Ascending aorta (tissue), 2 donors: ENCODE measurements at regions of chr18 and their contacts with region 1.

Region 1: DNA sequence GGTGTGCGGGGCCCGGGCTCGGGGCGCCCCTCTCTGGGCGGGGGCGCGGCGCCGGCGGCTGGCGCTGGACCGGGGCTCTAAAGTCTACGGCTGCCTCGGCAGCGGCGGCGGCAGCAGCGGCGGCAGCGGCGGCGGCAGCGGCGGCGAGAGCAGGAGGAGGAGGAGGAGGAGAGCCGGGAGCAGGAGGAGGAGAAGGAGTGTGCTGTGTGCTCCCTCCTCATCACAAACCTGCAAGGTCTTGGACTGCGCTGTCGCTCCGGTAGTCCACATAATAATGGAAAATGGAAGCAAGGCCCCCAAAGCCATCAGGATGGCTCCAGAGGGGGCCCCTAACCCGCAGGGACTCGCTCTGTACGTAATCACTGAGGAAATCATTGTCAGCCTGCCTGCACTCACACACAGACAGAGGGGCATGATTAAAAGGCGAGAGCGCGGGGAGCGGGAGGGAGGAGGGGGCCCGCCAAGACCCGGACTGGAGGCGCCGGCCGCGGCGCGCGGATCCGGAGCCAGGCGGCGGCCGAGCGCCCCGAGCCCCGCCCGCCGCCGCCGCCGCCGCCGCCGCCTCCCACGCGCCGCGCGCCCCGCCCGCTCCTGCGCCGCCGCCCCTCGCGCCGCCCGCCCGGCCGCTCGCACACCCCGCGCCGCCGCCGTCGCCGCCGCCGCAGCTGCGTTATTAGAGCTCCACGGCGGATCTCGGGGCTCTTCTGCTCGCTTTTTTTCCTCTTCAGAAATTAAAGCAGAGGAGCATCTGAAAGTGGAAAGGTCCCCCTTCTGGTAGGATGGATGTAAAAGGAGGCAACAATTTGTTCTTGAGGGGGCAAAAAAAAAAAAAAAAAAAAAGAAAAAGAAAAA is at the start of gene ZNF521:
- DNase-seq: peak; percentile 36 to 91
- H3K4me3 ChIP-seq: peak within 1 kb of the TSS; percentile 70 to 72
- H3K27ac ChIP-seq: peak within 1 kb of the TSS; percentile 71 to 83
- H3K4me1 ChIP-seq: peaks cover 2 to 10% of the 10 kb centered on the region in 2 donors
- H3K27me3 ChIP-seq: peaks cover 4% of the 10 kb centered on the region
- CTCF ChIP-seq: peak in 1 of 3 experiments; percentile 5
- total RNA-seq, gene ZNF521: 41.6 TPM

Region 2: GRCh38 chr18:23586249-23587196 is 1765.5 kb before region 1 on chr18 and contains the start of gene NPC1:
- intact Hi-C with region 1: loop called (anchors 10 kb)
- DNase-seq: peak; percentile 81 to 97
- H3K4me3 ChIP-seq: peak within 1 kb of the TSS; percentile 84 to 87
- H3K27ac ChIP-seq: peak within 1 kb of the TSS; percentile 98 to 100
- H3K4me1 ChIP-seq: peaks cover 10 to 29% of the 10 kb centered on the region in 2 donors
- H3K27me3 ChIP-seq: no peaks in the 10 kb centered on the region
- CTCF ChIP-seq: peak; percentile 90 to 96 (median 92)
- total RNA-seq, gene NPC1: 21.6 TPM

Region 3: GRCh38 chr18:24397694-24398365 is 954.2 kb before region 1 on chr18 and contains the start of gene OSBPL1A:
- intact Hi-C with region 1: loop called (anchors 10 kb)
- DNase-seq: peak; percentile 85 to 97
- H3K4me3 ChIP-seq: peak within 1 kb of the TSS; percentile 78 to 84
- H3K27ac ChIP-seq: peak within 1 kb of the TSS; percentile 84 to 90
- H3K4me1 ChIP-seq: no peaks in the 10 kb centered on the region
- H3K27me3 ChIP-seq: no peaks in the 10 kb centered on the region
- CTCF ChIP-seq: no peak
- total RNA-seq, gene OSBPL1A: 42.9 TPM

Region 4: GRCh38 chr18:25230658-25231326 is 121.2 kb before region 1 on chr18:
- intact Hi-C with region 1: loop called (anchors 2 kb)
- DNase-seq: peak; percentile 17 to 91
- H3K4me3 ChIP-seq: peak overlapping the region in 1 of 2 donors; percentile 43
- H3K27ac ChIP-seq: peak overlapping the region; percentile 68 to 80
- H3K4me1 ChIP-seq: peaks cover 0 to 21% of the 10 kb centered on the region in 2 donors
- H3K27me3 ChIP-seq: no peaks in the 10 kb centered on the region
- CTCF ChIP-seq: no peak

Region 5: GRCh38 chr18:25298853-25299274 is 53.1 kb before region 1 on chr18:
- intact Hi-C with region 1: no loop called
- DNase-seq: no peak
- H3K4me3 ChIP-seq: no peak overlapping the region
- H3K27ac ChIP-seq: no peak overlapping the region
- H3K4me1 ChIP-seq: no peaks in the 10 kb centered on the region
- H3K27me3 ChIP-seq: no peaks in the 10 kb centered on the region
- CTCF ChIP-seq: no peak

Region 6: GRCh38 chr18:25453556-25454269 is 101.7 kb after region 1 on chr18:
- intact Hi-C with region 1: no loop called
- DNase-seq: peak in 1 of 2 donors; percentile 64
- H3K4me3 ChIP-seq: no peak overlapping the region
- H3K27ac ChIP-seq: peak overlapping the region in 1 of 2 donors; percentile 24
- H3K4me1 ChIP-seq: no peaks in the 10 kb centered on the region
- H3K27me3 ChIP-seq: no peaks in the 10 kb centered on the region
- CTCF ChIP-seq: no peak

Region 7: GRCh38 chr18:25503567-25504081 is 151.6 kb after region 1 on chr18:
- intact Hi-C with region 1: loop called (anchors 1 kb)
- DNase-seq: peak in 1 of 2 donors; percentile 84
- H3K4me3 ChIP-seq: peak overlapping the region; percentile 46
- H3K27ac ChIP-seq: no peak overlapping the region
- H3K4me1 ChIP-seq: peaks cover 0 to 2% of the 10 kb centered on the region in 2 donors
- H3K27me3 ChIP-seq: no peaks in the 10 kb centered on the region
- CTCF ChIP-seq: no peak

Region 8: GRCh38 chr18:26226229-26227005 is 874.4 kb after region 1 on chr18 and contains the start of gene TAF4B:
- intact Hi-C with region 1: loop called (anchors 10 kb)
- DNase-seq: peak; percentile 71 to 95
- H3K4me3 ChIP-seq: peak within 1 kb of the TSS; percentile 80 to 96
- H3K27ac ChIP-seq: peak within 1 kb of the TSS; percentile 66 to 67
- H3K4me1 ChIP-seq: peaks cover 0 to 7% of the 10 kb centered on the region in 2 donors
- H3K27me3 ChIP-seq: no peaks in the 10 kb centered on the region
- CTCF ChIP-seq: no peak
- total RNA-seq, gene TAF4B: 3.0 TPM